Tibial artery (tissue), 4 donors: ENCODE measurements at regions of chr6 and their contacts with region 1.

Region 1: GRCh38 chr6:7389451-7390225 is at the starts of genes CAGE1 and RIOK1:
- DNase-seq: peak; percentile 95 to 97
- H3K4me3 ChIP-seq: peak within 1 kb of the TSS; percentile 85 to 87
- H3K27ac ChIP-seq: peak within 1 kb of the TSS; percentile 86 to 94
- H3K4me1 ChIP-seq: peaks cover 0 to 26% (median 9%) of the 10 kb centered on the region in 4 donors
- H3K27me3 ChIP-seq: no peaks in the 10 kb centered on the region
- CTCF ChIP-seq: peak in 1 of 2 experiments; percentile 11

Region 2: DNA sequence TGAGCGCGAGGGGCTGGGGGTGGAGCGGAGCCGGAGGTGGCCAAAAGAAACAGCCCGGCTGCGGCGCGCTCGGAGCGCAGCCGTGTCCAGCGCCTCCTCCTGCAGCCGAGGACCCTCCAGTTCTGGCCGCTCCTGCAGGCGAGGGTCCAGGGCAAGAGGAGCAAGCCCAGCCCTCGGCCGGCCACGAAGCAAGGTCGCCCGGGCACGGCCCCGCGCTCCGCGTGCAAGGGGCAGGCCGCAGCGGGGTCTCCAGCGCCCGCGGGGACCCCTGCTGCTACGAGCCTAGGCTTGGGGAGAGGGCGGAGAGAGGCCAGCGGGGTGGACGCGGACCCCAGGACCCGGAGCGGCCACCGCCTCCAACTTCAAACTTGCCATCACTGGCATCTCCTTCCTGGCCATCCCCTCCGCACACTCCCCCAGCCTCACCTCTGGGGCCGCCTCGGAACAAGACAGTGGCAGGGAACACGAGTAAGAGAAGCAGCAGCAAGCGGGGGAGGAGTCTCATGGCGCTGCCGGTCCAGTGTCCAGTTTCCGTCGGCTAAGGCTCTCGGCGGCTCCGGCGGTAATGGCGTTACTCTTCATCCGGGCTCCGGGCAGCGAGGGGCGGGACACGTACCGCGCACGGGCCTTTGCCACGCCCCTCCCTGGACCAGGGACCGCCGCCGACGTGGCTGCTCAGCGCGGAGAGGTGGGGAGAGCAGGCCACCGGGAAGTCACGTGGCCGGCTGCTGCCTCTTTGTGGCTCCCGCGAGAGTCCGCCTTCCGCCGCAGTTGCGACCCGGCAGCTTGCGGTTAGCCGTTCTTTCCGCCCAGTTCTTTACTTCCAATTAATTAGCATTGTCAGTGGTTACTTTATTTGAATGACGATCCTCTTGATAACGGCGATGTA is 76.8 kb before region 1 on chr6 and contains the start of gene SSR1:
- intact Hi-C with region 1: loop called (anchors 5 kb)
- DNase-seq: peak; percentile 96 to 98
- H3K4me3 ChIP-seq: peak within 1 kb of the TSS; percentile 97 to 98
- H3K27ac ChIP-seq: peak within 1 kb of the TSS; percentile 93 to 98
- H3K4me1 ChIP-seq: peaks cover 0 to 35% (median 16%) of the 10 kb centered on the region in 4 donors
- H3K27me3 ChIP-seq: no peaks in the 10 kb centered on the region
- CTCF ChIP-seq: peak in 1 of 2 experiments; percentile 2